GM10248 (cell line): ENCODE measurements at regions of chr4 and their contacts with region 1.

Region 1: DNA sequence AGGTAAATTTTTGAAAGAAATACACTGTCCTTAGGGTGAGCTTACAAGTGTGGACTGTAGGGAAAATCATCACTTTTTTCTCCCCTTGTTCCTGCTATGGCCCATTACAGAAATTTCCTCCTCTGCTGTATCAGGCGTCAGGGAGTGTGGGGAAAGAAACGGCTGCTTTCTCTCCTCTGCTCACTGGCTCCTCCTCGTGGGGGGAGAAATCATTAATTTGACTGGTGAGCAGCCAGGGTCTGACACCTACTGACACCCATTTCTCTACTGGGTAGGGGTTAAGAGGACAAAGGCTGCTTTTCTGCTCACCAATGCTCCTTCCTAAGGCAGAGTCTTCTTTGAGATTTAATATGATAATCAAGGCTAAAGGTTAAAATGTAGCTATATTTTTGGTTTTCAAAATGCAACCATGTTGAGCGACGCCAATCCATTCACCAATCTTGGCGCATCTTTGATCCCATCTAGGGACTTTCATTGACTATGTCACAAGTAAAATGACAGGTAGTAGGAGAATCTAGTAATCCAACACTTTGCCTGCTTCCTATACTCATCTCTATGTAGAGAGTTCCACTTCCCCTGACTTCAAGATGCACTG is 25.1 kb downstream of the SETD7 start:
- DNase-seq: peak; percentile 74
- CTCF ChIP-seq: peak; percentile 60

Region 2: DNA sequence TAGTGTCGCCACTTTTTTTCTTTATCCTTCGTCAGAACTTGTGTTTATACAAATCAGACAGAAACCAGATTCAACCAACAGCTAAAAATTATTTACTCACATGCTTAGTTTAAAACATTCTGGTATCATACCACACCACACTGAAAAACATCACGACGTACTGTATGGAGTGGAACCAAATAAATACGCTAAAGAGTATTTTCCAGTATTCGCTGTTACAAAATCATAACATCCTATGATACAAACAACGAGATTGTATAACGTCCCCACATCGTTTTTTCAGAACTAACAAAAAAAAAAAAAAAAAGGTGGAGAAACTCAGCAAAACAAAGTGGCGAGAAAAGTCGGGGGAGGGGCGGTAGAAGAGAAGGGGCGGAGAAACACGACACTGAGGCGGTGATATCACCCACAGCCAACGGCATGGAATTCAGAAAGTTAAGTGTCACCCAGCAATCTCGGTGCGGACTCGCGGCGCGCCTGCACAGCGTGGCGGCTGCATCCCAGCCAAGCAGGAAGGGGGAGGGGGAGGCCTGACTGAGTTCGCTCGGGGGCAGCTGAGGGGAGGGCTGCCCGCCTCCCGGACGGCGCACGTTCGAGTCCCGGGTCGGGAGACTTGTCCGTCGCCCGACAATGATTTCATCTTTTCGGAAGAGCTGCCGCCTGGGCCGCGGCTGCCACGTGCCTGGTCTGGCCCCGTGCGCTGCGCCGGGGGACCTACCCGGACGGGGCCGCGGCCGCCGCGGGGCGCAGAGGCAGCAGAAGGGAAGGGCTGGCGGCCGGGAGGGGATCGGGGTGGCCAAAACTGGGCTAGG is 24.2 kb after region 1 on chr4:
- CTCF ChIA-PET with region 1: interaction called, 17 read pairs
- POLR2A ChIA-PET with region 1: no interaction called
- DNase-seq: peak; percentile 49
- CTCF ChIP-seq: no peak